ENCODE measurements at regions of chr1 and their contacts with region 1.

Region 1: GRCh38 chr1:63691701-63692425 is 82.0 kb upstream of the ROR1 start:
- DNase-seq: peak in 7 of 9 donors; percentile 4 to 47 (median 41)
- ATAC-seq: peak; percentile 49
- H3K4me3 ChIP-seq: no peak overlapping the region
- H3K4me3 Mint-ChIP-seq: no peak overlapping the region
- H3K27ac ChIP-seq: no peak overlapping the region
- H3K27ac Mint-ChIP-seq: no peak overlapping the region
- H3K4me1 ChIP-seq: no peaks in the 10 kb centered on the region
- H3K4me1 Mint-ChIP-seq: peaks cover 0 to 8% (median 6%) of the 10 kb centered on the region in 7 donors
- H3K27me3 ChIP-seq: no peaks in the 10 kb centered on the region
- H3K27me3 Mint-ChIP-seq: peaks cover 0 to 18% (median under 1%) of the 10 kb centered on the region in 5 donors

Region 2: DNA sequence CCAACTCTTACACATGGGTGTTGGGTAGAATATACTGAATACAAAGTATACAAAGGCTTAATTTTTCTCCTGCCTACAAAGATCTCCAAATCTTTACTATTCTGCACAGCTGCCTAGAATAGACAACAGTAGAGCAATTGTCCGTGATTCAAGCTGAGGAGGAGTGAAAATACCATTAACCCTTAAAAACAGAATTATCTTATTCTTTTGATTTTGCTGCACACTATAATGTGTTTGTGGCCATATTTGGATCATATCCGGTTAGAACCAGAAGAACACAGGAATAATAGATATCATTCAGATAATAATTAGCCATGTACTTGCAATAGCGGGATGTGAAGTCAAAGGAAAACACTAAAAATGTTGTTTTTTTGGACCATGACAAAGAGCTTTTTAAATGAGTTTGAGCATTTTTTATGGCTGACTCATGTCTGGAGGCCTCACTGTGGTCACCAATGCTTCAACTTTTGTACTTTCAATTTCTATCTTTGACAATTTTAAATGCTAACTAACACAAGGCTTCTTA is 567.1 kb before region 1 on chr1:
- CTCF ChIA-PET with region 1: no interaction called
- POLR2A ChIA-PET with region 1: no interaction called
- intact Hi-C with region 1: no loop called
- DNase-seq: no peak
- ATAC-seq: no peak
- H3K4me3 ChIP-seq: no peak overlapping the region
- H3K4me3 Mint-ChIP-seq: no peak overlapping the region
- H3K27ac ChIP-seq: no peak overlapping the region
- H3K27ac Mint-ChIP-seq: no peak overlapping the region
- H3K4me1 ChIP-seq: no peaks in the 10 kb centered on the region
- H3K4me1 Mint-ChIP-seq: no peaks in the 10 kb centered on the region
- H3K27me3 ChIP-seq: no peaks in the 10 kb centered on the region
- H3K27me3 Mint-ChIP-seq: peaks cover 6 to 28% (median 16%) of the 10 kb centered on the region in 5 donors

Region 3: GRCh38 chr1:63917571-63918417 is 225.9 kb after region 1 on chr1:
- CTCF ChIA-PET with region 1: no interaction called
- POLR2A ChIA-PET with region 1: no interaction called
- intact Hi-C with region 1: loop called in 1 of 2 experiments (anchors 1 kb)
- DNase-seq: no peak
- ATAC-seq: no peak
- H3K4me3 ChIP-seq: no peak overlapping the region
- H3K4me3 Mint-ChIP-seq: no peak overlapping the region
- H3K27ac ChIP-seq: no peak overlapping the region
- H3K27ac Mint-ChIP-seq: no peak overlapping the region
- H3K4me1 ChIP-seq: no peaks in the 10 kb centered on the region
- H3K4me1 Mint-ChIP-seq: peaks cover 0 to 3% (median 0%) of the 10 kb centered on the region in 7 donors
- H3K27me3 ChIP-seq: no peaks in the 10 kb centered on the region
- H3K27me3 Mint-ChIP-seq: peaks cover 0 to 12% (median 3%) of the 10 kb centered on the region in 5 donors